ENCODE measurements at regions of chr12 and their contacts with region 1.

Region 1: GRCh38 chr12:125330645-125331341 is 265.6 kb downstream of the AACS start:
- DNase-seq: peak; percentile 51
- H3K4me3 Mint-ChIP-seq: peak overlapping the region; percentile 42
- H3K27ac Mint-ChIP-seq: no peak overlapping the region
- H3K4me1 Mint-ChIP-seq: no peaks in the 10 kb centered on the region
- H3K27me3 Mint-ChIP-seq: peaks cover 46% of the 10 kb centered on the region
- CTCF ChIP-seq: peak; percentile 96

Region 2: DNA sequence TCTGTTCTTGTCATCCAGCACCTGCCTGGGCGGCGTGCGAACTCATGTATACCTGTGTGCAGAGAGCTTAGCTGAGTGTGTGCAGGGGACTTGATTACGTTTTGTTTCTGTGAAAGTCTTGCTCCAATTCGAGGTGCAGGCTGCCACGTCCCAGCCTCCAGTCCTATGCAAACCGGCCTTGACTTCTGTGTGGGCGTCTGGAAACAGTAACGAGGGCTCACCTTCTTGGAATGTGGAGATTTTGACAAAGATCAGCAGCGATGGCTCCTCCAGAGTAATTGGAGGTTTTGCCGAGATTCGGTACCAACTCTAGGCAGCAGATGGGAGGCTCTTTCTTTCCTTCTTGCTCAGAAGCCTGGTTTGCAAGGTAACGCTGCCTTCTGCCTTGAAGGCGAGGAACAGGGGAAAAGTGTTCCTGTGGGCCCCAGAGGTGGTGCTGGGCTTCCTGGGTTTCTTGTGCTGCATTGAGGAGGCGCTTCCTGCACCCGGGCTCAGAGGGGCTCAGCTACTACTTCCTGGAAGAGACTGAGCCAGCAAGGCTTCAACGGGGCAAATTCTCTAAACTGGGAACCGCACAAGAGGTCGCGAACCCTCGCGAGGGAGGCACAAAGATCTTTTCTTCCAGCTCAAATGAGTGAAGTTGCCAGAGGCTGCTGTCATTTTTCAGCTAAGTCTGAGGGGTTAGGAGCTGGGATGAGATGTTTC is 16.6 kb before region 1 on chr12:
- CTCF ChIA-PET with region 1: interaction called, 19 read pairs
- POLR2A ChIA-PET with region 1: no interaction called
- intact Hi-C with region 1: no loop called
- DNase-seq: no peak
- H3K4me3 Mint-ChIP-seq: no peak overlapping the region
- H3K27ac Mint-ChIP-seq: no peak overlapping the region
- H3K4me1 Mint-ChIP-seq: no peaks in the 10 kb centered on the region
- H3K27me3 Mint-ChIP-seq: no peaks in the 10 kb centered on the region
- CTCF ChIP-seq: no peak

Region 3: GRCh38 chr12:125320177-125320576 is 10.6 kb before region 1 on chr12:
- CTCF ChIA-PET with region 1: interaction called, 19 read pairs
- POLR2A ChIA-PET with region 1: no interaction called
- intact Hi-C with region 1: no loop called
- DNase-seq: no peak
- H3K4me3 Mint-ChIP-seq: no peak overlapping the region
- H3K27ac Mint-ChIP-seq: no peak overlapping the region
- H3K4me1 Mint-ChIP-seq: no peaks in the 10 kb centered on the region
- H3K27me3 Mint-ChIP-seq: no peaks in the 10 kb centered on the region
- CTCF ChIP-seq: no peak

Region 4: DNA sequence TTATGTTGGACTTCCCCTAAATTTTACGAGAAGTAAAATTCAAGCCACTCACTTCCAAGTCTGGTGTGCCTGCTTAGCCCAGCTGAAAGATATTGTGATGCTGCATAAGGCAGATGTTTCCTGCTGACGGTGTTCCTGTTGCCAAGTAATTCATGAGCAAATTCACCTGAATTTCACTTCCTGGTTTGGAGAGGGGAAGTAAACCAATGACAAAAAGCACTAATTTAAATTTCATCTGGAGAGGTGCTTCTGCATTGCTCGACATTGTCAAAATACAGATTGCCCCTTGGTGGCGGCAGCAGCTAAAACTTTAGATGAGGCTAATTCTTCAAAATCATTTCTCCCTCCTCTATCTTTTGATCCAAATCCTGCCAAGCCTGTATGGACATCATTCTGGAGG is 15.6 kb after region 1 on chr12:
- CTCF ChIA-PET with region 1: interaction called, 39 read pairs
- POLR2A ChIA-PET with region 1: interaction called, 5 read pairs
- intact Hi-C with region 1: no loop called
- DNase-seq: no peak
- H3K4me3 Mint-ChIP-seq: no peak overlapping the region
- H3K27ac Mint-ChIP-seq: no peak overlapping the region
- H3K4me1 Mint-ChIP-seq: no peaks in the 10 kb centered on the region
- H3K27me3 Mint-ChIP-seq: peaks cover 48% of the 10 kb centered on the region
- CTCF ChIP-seq: no peak

Region 5: GRCh38 chr12:125402874-125403789 is 72.3 kb after region 1 on chr12:
- CTCF ChIA-PET with region 1: interaction called, 41 read pairs
- POLR2A ChIA-PET with region 1: no interaction called
- intact Hi-C with region 1: loop called (anchors 1 kb)
- DNase-seq: peak; percentile 45
- H3K4me3 Mint-ChIP-seq: no peak overlapping the region
- H3K27ac Mint-ChIP-seq: no peak overlapping the region
- H3K4me1 Mint-ChIP-seq: no peaks in the 10 kb centered on the region
- H3K27me3 Mint-ChIP-seq: peaks cover 56% of the 10 kb centered on the region
- CTCF ChIP-seq: peak; percentile 47

Region 6: DNA sequence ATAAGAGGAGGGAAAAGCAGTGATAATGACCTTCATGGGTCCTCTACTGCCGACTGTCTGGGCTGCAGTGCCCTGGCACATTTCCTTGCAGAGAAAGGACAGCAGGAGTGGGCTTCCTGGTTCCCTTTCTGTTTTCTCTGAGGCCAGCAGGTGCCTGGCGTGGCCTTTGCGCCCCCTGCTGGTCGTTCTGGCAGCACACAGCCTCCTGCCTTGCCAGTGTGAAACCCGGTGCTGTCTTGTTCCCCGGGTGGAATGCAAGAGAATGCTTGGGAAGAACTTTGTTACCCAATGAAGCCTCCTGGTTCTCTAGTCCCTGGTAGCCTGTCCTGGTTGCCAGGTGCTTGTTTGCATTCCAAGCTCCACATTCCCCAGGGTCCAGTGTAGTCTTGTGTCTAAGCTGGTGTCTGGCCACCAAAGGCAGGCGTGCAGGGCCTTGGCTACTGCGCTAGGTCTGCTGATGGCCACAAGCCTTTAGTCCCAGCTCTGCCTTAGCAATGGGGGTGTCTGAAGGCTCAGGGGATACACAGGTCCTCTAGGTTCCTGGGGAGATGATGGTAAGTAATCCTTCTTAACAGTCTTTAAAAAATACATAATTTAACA is 1543.7 kb after region 1 on chr12:
- CTCF ChIA-PET with region 1: no interaction called
- POLR2A ChIA-PET with region 1: no interaction called
- intact Hi-C with region 1: loop called (anchors 10 kb)
- DNase-seq: peak; percentile 60
- H3K4me3 Mint-ChIP-seq: no peak overlapping the region
- H3K27ac Mint-ChIP-seq: no peak overlapping the region
- H3K4me1 Mint-ChIP-seq: no peaks in the 10 kb centered on the region
- H3K27me3 Mint-ChIP-seq: no peaks in the 10 kb centered on the region
- CTCF ChIP-seq: peak; percentile 94

Measured in MCF 10A (cell line).